ENCODE measurements at regions of chr5 and their contacts with region 1.

Region 1: DNA sequence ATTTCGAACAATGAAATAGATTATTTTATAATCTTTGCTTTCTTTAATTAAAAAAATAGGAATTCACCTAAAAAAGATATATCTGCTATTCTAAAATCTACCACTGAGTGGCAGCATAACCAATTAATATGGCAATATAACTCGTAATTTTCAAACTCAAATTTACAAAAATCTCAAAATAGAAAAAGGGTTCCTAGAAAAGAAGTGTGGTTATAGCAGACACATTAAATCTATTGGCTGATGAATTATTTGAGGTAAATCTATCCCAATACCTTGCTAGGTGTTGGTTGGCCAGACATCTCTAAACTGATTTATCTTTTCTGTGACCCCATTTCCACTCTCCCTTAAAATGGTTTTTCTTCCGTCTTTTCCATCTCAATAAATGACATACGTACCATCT is 30.2 kb upstream of the NRG2 start:
- DNase-seq: no peak

Region 2: GRCh38 chr5:139795074-139796001 is 278.0 kb before region 1 on chr5 and contains the start of gene PSD2:
- intact Hi-C with region 1: no loop called
- DNase-seq: peak in 40 of 42 donors; percentile 42 to 89 (median 72)

Region 3: DNA sequence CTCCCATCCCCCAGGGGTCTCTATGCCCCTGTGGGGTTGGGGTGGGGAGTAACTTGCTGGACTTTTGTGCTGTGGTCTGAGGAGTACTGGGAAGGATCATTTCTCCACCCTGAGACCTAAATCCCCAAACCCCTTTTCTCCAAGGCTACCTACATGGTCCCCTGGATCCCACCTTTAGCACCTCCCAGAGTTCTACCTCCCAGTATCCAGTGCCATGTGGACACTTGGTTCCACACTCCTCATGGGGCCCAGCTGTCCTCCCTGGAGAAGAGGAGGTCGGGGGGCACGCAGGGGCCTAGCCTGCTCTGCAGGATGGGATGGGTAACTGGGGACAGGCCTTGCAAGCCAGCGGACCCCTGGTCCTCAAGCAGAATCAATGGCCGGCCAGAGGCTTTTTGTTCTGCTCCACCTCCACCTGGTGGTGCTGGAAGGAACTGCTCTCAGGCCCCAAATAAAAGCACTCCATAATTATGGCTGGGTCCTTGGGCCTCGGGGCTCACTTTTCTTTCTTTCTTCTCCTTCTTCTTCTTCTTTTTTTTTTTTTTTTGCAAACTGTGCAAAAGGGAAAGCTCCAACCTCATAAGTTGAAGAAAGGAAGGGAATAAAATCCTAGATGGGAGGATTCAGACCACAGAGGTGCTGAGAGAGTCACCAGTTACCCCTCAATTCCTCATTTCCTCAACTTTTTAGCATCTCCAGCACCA is 209.3 kb before region 1 on chr5:
- intact Hi-C with region 1: no loop called
- DNase-seq: peak; percentile 48 to 93 (median 80)

Region 4: DNA sequence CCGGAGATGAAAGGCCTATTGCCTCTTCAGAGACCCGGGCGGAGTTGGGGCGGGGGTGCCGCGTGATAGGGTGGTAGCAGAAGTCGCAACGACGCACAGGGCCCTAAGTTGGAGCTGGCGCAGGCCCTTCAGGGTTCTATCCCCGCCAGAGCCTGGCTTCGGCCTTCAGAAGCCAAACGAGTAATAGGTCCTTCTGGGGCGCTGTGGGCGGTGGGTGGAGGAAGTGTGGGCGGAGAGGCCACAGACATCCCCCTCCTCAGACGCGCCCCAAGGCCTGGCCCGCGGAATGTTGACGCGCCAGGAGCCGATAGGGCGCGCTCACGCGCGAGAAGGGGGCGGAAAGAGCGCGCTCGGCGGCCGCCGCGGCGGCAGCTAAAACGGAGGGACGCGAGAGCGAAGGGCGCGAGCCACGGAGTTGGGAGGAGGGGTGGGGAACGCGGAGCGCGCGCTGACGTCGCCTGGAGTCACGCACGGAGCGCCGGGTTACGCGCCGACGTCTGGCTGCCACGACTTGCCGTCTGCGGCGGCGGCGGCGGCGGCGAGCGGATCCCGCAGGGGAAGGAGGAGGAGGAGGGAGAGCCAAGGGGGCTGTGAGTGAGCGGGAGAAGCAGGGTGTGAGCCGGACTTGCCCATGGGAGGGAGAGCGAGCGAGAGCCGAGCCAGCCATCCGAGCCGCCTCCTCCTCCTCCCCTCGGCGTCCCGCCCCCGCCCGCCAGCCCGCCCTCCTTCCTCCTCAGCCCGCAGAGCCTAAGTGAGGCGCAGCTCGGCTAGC is 34.2 kb after region 1 on chr5:
- intact Hi-C with region 1: loop called (anchors 5 kb)
- DNase-seq: peak; percentile 83 to 97 (median 94)

Region 5: DNA sequence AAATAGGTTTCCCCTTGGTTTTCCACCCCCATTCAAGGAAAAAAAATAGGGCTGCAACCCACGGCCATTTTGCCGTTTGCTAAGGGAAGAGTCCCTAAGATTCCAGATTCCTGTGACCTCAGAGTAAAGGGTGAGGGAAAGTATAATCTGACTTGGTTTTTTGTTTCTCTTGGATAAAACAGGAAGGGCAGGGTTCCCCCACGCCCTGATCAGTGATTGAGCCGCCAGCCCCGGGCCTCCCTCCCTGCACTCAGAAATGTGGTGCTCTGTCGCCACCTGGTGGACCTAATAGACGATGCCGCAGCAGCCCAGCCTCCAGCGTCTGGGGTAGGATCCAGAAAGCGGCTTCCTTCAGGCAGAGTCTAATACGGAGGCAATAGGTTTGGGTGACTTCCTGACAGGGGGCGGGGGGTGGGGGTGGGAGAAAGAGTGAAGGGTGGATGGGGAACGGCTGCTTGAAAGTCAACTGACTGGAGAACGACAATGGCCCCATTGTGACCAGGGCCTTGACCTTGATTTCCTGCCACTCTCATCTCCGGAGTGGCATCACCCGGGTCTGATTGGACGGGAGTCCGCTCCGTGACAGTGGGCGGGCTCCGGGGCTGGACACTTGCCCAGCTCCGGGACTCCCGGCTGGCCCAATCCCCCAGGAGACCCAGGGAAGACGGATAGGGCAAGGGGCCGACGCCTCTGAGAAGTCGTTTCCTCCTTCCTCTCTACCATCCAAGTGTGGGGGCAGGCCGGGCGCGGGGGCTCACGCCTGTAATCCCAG is 83.9 kb after region 1 on chr5:
- intact Hi-C with region 1: loop called (anchors 2 kb)
- DNase-seq: peak; percentile 80 to 96 (median 91)